ENCODE measurements at regions of chr2 and their contacts with region 1.

Region 1: GRCh38 chr2:182591774-182592173 is 124.3 kb upstream of the DNAJC10 start:
- DNase-seq: no peak

Region 2: DNA sequence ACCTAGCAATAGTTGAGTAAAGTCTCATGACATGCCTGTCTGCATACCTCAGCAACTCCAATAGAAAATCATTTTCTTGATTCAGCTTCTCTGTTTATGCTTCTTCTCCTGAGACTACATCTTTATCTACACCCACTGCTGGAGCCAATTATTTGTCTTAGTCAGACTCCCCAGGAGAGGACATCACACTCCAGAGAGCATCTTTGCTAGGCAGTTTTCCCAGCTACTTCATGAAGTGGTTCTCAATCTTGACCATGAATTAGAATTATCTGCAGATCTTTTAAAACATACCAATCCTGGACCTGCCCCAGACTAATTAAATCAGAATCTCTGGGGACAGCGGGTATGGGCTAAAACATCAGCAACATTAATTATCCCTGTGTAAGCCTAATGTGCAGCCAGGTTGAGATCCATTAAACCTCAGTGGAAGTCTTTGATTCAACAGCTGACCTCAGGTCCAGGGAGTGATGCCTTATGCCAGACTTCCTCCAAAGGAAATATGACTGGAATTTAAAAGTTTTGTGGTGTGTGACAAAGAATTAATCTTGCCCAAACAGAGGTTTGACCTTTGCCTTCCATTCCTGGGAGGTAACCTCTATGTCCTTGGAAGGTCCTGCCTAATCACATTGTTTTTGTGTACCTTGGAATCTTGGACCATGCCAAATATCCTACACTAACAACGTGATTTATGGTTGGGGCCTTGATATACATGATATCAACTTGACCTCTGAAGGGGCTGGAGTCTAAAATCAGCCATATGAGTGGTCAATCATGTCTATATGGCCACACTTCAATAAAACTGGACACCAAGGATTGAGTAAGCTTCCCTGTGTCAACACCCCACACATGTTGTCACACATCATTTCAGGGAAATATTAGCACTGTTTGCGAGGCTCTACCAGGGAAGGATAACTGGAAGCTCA is 25.0 kb after region 1 on chr2:
- intact Hi-C with region 1: loop called in 1 of 2 experiments (anchors 1 kb)
- DNase-seq: no peak